Right ventricle myocardium superior (tissue), 1 donor: ENCODE measurements at regions of chr11 and their contacts with region 1.

Region 1: DNA sequence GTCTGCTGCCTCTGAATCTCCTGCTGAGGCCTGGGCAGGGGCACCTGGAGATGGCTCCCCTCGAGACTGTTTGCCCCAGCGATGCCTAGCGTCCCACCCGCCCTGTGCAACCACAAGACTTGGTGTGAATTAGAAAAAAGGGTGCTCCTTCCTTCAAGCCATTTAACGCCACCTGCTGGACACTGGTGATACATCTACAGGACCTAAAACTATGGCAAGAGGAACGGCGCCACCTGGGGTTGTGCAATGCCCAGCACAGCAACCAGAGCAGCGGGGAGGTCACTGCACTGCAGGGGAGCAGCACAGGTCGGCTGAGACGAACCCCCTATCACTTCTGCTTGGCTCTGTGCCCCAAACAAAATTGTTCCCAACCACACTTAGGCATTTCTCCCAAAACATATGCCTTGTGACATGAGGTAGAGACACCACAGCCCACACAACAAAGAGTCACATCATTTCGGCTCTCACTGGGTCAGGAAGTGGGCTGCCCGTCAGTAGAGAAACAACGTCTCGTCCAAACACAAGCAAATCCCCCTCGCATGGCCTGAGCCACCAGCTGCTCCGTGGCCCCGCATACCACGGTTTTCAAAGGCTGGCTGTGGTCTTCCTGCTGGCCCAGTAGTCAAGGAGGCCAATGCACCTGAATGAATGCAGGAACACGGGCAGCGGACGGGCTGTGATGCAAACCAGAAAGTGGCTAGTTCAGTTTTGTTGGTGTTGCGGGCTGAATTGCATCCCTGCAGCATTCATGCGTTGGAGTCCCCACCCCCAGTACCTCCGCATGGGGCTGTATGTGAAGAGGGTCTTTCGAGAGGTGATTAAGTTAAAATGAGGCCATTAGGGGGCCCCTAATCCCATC is 171.9 kb downstream of the SHANK2 start:
- DNase-seq: peak; percentile 65
- ATAC-seq: peak; percentile 59

Region 2: DNA sequence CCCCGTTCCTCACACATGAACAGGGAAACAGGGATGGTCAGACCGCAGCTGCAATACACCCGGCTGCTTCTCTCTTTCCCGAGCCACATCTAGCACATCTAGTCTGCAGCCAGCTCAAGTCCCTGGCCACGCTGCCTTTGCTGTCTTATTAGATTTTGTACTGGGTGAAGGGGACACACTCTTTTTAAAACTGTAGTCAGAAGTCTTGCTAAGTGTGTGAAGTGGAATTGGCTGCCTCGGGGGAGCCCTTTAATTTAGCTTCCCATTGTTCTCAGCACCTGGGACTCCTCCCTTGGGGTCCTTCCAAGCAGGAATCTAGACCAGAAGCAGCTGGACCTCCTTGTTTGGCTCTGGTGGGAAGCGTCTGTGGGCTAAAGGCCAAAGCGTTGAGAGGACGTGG is 262.1 kb before region 1 on chr11:
- intact Hi-C with region 1: loop called (anchors 5 kb)
- DNase-seq: no peak
- ATAC-seq: no peak

Region 3: GRCh38 chr11:70935006-70935768 is 145.3 kb before region 1 on chr11:
- intact Hi-C with region 1: no loop called
- DNase-seq: no peak
- ATAC-seq: no peak

Region 4: DNA sequence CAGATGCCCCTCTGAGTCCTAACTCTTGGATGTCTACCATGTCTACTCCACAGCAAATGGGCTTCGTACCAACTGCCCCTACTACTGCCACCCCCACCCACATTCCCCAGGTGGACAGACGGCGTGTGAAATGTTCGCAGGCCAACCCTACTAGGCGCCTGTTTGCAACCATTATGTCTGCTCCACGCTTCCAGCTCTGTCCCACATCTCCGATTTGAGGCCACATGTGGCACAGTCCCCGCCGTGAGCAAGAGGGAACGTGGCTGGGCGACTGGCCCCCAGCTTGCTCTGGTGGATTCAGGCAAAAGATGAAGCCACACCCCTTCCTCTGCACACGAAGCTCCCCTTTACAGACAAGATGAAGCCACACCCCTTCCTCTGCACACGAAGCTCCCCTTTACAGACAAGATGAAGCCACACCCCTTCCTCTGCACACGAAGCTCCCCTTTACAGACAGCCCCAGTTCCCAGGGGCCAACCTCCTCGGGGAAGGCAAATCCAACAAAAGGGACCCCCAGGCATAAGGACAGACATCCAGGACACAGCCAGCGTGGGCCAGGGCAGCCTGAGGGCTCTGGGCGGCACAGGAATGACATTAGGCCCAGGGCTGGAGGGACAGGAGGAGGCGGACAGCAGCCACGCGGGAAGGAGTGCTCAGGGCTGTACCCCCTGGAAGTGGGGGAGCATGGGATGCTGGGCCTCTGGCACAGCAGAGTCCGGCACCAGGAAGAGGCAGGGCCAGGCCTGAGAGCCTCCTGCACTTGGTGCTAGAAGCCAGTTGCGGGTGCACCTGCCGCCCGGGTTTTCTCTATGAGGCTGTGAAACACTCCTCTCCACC is 65.7 kb after region 1 on chr11:
- intact Hi-C with region 1: no loop called
- DNase-seq: no peak
- ATAC-seq: no peak